ENCODE measurements at regions of chr12 and their contacts with region 1.

Region 1: GRCh38 chr12:4228122-4228580 is 45.4 kb upstream of the CCND2 start:
- DNase-seq: peak; percentile 29 to 73
- H3K4me3 ChIP-seq: peak overlapping the region; percentile 23 to 67 (median 46); a peak in 6 of 8 replicates
- H3K27ac ChIP-seq: no peak overlapping the region
- H3K4me1 ChIP-seq: no peaks in the 10 kb centered on the region; a peak in 3 of 7 replicates
- H3K27me3 ChIP-seq: no peaks in the 10 kb centered on the region
- CTCF ChIP-seq: peak; percentile 34 to 48 (median 48)
- EP300 ChIP-seq: no peak
- POLR2A ChIP-seq: peak in 1 of 2 experiments; percentile 66; a peak in 1 of 3 replicates
- RAD21 ChIP-seq: peak; percentile 35 to 59

Region 2: DNA sequence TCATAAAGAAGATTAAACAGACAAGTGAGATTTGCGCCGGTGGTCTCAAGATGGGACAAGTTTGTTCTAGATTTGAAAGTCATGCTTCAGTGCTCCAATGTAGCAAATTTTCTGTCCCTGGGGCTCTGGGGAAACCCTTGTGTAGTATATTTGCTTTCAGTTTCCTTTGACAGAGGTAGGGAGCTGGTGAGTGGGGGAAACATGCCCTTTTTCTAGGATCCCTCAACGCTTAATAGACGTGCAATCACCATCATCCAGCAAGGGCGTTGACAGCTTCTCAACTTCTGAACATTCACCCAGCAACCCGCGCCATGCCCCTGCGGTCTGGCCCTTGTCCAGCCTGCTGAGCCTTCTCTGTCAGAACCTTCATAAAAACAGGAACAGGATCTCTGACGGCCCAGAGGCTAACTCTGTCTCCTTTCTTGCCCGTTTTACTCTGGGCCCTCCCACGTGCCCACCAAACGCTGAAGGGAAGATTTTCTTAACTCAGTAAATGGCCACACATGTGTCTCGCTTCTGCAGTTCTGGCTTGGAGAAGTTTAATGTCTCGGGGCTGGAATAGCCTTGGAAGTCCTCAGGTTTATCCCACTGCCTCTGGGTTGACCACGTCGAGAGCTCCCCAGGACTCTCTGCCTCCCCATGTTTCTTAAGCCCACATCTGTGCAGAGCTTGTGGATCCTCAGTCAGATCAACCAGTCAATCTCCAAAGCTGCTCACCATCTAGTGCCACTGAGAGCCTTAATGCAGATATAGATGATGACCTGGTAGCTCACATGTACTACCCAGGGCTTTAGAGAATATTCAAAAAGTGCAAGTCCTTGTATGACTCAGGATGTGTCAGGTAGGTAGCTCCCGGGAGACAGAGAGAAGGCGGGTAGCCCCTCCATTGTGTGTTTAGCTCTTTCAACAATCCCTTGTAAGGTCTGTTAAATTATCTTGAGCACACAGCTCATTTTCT is 12.6 kb before region 1 on chr12:
- CTCF ChIA-PET with region 1: interaction called, 13 read pairs
- POLR2A ChIA-PET with region 1: interaction called, 5 read pairs
- DNase-seq: peak in 1 of 2 experiments; percentile 40
- H3K4me3 ChIP-seq: no peak overlapping the region
- H3K27ac ChIP-seq: no peak overlapping the region
- H3K4me1 ChIP-seq: no peaks in the 10 kb centered on the region; a peak in 1 of 7 replicates
- H3K27me3 ChIP-seq: no peaks in the 10 kb centered on the region; a peak in 1 of 7 replicates
- CTCF ChIP-seq: no peak
- EP300 ChIP-seq: no peak
- POLR2A ChIP-seq: no peak
- RAD21 ChIP-seq: no peak

Region 3: DNA sequence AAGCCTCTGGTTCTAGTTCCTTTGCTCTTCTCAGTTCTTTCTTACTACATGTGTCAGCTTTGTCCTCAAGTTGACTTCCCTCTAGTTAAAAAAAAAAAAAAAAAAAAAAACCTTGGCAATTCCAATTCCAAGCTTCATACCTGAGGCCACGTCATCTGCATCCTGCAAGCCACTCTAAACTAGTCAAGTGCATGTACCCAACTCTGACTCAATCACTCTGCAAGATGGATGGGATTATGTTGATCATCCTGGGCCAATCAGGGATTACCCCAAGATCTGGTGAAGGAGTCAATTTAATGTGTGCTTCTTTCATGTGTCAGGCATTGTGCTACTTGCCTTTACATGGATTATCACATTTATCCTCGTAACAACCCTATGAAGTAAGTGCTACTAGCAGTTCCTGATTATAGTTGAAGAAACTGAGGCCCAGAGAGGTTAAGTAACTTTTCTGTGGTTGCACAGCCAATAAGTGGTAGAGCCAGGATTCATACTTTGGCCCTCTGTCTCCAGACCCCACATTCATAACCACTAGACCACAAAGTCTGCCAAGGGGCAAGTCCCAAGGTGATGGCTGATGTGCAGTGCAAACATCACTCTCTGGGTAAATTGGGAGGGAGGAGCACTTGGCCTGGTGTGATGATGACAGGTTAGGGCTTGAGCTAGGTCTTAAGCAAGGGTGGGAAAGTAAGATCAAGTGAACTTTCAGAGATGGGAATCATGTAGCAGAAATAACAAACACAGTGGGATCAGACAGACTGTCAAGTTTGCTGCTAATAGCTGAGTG is 28.1 kb after region 1 on chr12:
- CTCF ChIA-PET with region 1: no interaction called
- POLR2A ChIA-PET with region 1: no interaction called
- DNase-seq: no peak
- H3K4me3 ChIP-seq: no peak overlapping the region
- H3K27ac ChIP-seq: no peak overlapping the region
- H3K4me1 ChIP-seq: peaks cover 0 to 6% (median 0%) of the 10 kb centered on the region in 4 experiments; a peak in 2 of 7 replicates
- H3K27me3 ChIP-seq: no peaks in the 10 kb centered on the region
- CTCF ChIP-seq: no peak
- EP300 ChIP-seq: no peak
- POLR2A ChIP-seq: no peak
- RAD21 ChIP-seq: no peak

Region 4: GRCh38 chr12:4269279-4269991 is 41.3 kb after region 1 on chr12:
- CTCF ChIA-PET with region 1: interaction called, 3 read pairs
- POLR2A ChIA-PET with region 1: interaction called, 10 read pairs
- DNase-seq: peak in 1 of 2 experiments; percentile 93
- H3K4me3 ChIP-seq: peak overlapping the region; percentile 57 to 97 (median 68)
- H3K27ac ChIP-seq: no peak overlapping the region
- H3K4me1 ChIP-seq: peaks cover 4 to 20% (median 9%) of the 10 kb centered on the region in 4 experiments
- H3K27me3 ChIP-seq: peaks cover 3 to 45% (median 26%) of the 10 kb centered on the region in 4 experiments; a peak in 6 of 7 replicates
- CTCF ChIP-seq: no peak
- EP300 ChIP-seq: peak in 1 of 2 experiments; percentile 22; a peak in 1 of 3 replicates
- POLR2A ChIP-seq: peak in 1 of 2 experiments; percentile 25; a peak in 1 of 3 replicates
- RAD21 ChIP-seq: 0 out of 4 replicates have a peak, but pooled peaks of 1 of the 2 experiments have one; percentile 20

Measured in H1 (cell line).